A673 (cell line): ENCODE measurements at regions of chr9 and their contacts with region 1.

Region 1: DNA sequence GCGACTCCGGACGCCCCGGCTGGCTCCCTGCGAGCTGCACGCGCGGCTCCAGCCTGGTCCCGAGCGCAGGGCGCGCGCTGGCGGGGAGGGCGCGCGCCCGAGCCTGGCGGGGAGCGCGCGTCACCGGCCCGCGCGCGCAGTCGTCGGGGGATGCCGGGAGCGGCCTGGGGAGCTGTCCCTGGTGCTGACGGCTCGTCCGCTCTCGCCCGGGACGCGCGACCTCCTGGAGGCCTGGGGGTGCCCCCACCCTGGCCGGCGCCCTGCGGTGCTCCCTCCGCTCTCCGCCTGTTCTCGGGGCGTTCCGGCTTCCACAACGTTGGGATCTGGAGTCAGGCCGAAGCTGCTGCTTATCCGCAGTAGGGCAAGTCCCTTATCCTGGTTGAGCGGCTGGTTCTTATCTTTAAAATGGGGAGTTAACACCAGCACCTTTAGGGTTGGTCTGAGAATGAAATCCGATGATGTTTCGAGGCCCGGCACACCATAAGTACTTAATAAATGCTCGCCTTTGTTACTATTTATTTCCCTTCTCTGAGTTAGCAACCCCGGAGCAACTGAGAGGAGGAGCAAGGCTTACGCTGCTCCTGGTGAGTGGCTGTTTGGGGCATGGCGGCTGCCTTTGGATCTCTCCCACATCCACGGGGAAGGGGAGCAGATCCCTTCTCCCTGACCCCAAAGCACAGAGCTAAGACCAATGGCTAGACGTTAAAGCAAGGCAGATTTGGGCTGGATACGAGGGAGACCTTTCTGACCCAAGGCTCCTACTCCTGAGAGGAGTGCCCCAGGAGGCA is at the start of gene FAM163B:
- DNase-seq: peak; percentile 69
- H3K4me3 ChIP-seq: no peak within 1 kb of the TSS
- H3K27ac ChIP-seq: no peak within 1 kb of the TSS
- H3K4me1 ChIP-seq: peaks cover 4% of the 10 kb centered on the region
- H3K27me3 ChIP-seq: peaks cover 64% of the 10 kb centered on the region
- CTCF ChIP-seq: no peak
- total RNA-seq, gene FAM163B: not detected in 2 replicates

Region 2: GRCh38 chr9:133726401-133727276 is 117.1 kb after region 1 on chr9:
- CTCF ChIA-PET with region 1: no interaction called
- POLR2A ChIA-PET with region 1: no interaction called
- intact Hi-C with region 1: loop called (anchors 10 kb)
- DNase-seq: peak; percentile 62
- H3K4me3 ChIP-seq: no peak overlapping the region
- H3K27ac ChIP-seq: no peak overlapping the region
- H3K4me1 ChIP-seq: no peaks in the 10 kb centered on the region
- H3K27me3 ChIP-seq: no peaks in the 10 kb centered on the region
- CTCF ChIP-seq: peak; percentile 54